ENCODE measurements at regions of chr3 and their contacts with region 1.

Region 1: GRCh38 chr3:12994607-12995388 is 78.4 kb downstream of the IQSEC1 start:
- DNase-seq: no peak
- H3K4me3 ChIP-seq: peak overlapping the region; percentile 71
- CTCF ChIP-seq: peak; percentile 92

Region 2: DNA sequence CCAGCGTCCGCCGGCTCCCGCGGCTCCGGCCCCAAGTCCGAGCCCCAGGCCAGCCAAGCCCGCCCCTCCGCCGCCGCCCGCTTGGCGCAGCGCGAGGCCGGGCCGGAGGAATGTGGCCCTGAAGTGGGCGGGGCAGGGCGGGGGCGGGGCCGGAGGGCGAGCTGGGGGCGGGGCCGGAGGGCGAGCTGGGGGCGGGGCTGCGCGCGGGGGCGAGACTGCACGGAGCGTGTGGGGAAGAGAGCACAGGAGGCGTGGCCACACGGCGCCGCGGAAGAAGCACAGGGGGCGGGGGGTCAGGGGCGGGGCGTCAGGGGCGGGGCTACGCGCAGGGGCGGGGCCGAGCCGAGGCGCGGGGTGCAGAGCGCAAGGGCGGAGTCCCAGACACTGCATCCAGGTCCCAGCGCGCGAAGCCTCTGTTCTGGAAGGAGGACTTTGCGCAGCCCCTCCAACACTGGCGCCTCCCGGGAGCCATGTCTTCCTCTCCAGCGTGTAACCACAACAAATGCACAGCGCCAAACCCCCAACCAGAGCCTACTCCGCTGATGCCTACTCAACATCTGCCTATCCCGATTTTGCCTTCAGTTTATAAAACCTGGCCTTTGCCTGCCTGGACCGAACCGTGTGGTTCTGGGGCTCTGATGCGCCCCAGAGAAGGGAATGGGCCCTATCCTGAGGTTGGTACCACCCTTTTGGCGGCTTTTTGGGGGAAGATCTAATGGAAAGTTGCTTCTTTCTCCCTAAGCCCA is 27.0 kb before region 1 on chr3:
- CTCF ChIA-PET with region 1: interaction called, 12 read pairs
- POLR2A ChIA-PET with region 1: no interaction called
- DNase-seq: no peak
- H3K4me3 ChIP-seq: peak overlapping the region; percentile 86
- CTCF ChIP-seq: no peak

Region 3: DNA sequence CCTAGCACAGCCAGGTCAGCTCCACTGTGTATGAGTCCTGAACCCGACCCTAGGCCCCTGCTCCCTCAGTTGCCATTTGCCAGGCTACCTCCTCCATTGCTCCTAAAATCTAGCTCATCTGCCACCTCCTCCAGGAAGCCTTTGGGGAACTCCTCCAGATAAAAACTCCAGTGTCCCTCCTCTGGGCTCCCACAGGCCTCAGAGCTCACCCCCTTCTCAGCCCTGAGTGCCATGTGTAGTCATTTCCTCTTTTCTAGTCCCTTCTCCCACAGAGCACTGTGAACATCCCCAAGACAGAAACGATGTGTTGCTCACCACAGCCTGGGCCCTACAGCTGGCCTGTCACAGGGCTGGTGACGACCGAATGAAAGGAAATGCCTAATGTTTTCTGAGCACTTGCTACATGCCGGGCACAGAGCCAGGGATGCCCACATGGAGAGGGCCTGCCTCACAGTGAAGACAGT is 17.5 kb after region 1 on chr3:
- CTCF ChIA-PET with region 1: interaction called, 46 read pairs
- POLR2A ChIA-PET with region 1: no interaction called
- DNase-seq: no peak
- H3K4me3 ChIP-seq: no peak overlapping the region
- CTCF ChIP-seq: no peak

Region 4: GRCh38 chr3:13022348-13023234 is 27.8 kb after region 1 on chr3:
- CTCF ChIA-PET with region 1: interaction called, 31 read pairs
- POLR2A ChIA-PET with region 1: no interaction called
- DNase-seq: peak; percentile 24
- H3K4me3 ChIP-seq: peak overlapping the region; percentile 24
- CTCF ChIP-seq: no peak

Measured in AG04449 (cell line).